Panc1 (cell line): ENCODE measurements at regions of chr22 and their contacts with region 1.

Region 1: GRCh38 chr22:28620244-28620922 is 59.3 kb downstream of the TTC28 start:
- DNase-seq: no peak
- ATAC-seq: no peak
- H3K4me3 ChIP-seq: no peak overlapping the region
- H3K27ac ChIP-seq: no peak overlapping the region
- H3K4me1 ChIP-seq: no peaks in the 10 kb centered on the region
- H3K27me3 ChIP-seq: no peaks in the 10 kb centered on the region
- CTCF ChIP-seq: no peak

Region 2: DNA sequence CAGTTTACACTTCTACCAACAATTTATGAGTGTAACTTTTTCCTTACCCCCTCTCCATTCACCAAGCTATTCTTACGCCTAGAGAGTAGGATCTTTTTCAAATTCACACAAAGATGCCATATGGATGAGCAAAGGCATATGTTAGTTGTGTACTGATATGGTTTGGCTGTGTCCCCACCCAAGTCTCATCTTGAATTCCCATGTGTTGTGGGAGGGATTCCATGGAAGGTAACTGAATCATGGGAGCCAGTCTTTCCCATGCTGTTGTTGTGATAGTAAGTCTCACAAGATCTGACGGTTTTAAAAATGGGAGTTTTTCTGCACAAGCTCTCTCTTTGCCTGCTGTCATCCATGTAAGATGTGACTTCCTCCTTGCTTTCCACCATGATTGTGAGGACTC is 18.9 kb after region 1 on chr22:
- CTCF ChIA-PET with region 1: no interaction called
- POLR2A ChIA-PET with region 1: interaction called, 12 read pairs
- in situ Hi-C with region 1: no loop called
- intact Hi-C with region 1: no loop called
- DNase-seq: no peak
- ATAC-seq: no peak
- H3K4me3 ChIP-seq: no peak overlapping the region
- H3K27ac ChIP-seq: no peak overlapping the region
- H3K4me1 ChIP-seq: no peaks in the 10 kb centered on the region
- H3K27me3 ChIP-seq: no peaks in the 10 kb centered on the region
- CTCF ChIP-seq: no peak